ENCODE measurements at regions of chr11 and their contacts with region 1.

Region 1: DNA sequence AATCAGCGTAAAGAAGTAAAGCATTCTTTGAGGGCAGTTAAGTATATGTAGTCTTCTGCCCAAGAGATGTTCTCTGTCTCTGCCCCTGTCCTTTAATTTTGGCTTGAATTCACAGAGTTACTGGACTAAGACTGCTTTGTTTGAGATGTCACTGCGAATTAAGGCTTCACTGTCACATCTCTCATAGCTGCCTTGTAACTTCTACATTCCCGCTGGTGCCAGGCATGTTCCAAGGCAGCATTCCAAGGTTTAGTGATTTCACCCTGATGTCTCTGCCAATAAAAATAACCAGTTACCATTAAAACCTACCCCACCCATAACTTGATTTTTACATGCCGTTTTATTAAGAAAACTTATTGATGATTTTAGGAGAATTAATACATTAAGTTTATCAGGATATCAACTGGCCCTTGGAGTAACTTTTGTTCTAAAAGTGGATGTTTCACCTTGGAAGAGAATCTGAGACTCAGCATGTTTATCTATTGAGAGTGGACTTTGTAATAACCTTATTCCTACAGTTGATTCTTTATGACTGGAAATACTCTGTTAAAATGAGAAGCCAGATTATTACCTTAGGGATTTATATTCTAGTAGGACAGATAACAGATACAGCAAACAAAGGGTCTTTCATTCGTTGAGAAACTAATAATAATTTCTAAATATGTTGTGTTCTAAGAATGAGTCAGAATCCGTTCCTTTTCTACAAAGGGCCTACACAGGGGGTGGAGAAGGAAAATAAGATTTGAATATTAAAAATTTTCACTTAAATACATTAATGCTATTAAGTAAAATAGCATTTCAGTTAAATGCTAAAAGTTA is 110.2 kb downstream of the UVRAG start:
- DNase-seq: peak; percentile 52
- ATAC-seq: peak; percentile 75
- H3K4me3 ChIP-seq: no peak overlapping the region
- H3K27ac ChIP-seq: peak overlapping the region; percentile 46
- H3K4me1 ChIP-seq: peaks cover 19% of the 10 kb centered on the region
- H3K27me3 ChIP-seq: no peaks in the 10 kb centered on the region
- CTCF ChIP-seq: no peak

Region 2: DNA sequence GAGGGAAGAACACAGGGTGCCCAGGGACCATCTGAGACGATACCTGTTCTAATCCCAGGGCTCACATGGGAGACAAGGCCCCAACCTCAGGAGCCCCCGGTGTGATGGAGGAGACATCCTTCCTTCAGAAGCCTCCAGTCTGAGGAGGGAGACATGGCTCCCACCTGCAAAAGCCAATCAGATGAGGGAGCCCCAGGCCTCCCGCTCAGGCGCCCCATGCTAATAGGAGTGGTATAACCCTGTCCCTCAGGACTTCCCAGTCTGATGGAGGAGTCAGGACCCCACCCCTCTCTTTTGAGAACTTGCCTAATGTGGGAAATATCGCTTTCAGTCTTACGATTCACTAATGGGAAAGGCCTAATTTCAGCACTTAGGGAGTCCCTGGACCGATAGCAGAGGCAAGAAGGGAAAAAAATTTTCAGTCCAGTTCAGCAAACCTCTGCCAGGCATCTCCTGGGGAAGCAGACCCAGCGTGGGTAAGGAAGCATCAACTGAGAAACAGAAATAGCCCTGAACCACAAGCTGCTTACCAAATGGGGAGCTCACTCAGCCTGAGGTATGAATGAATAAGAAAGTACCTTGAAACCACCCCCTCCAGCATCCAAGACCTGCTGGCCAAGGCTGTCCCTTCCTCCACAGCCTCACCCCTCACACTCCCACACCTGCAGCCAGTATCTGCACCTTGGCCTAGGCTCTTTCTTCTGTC is 579.6 kb before region 1 on chr11:
- CTCF ChIA-PET with region 1: no interaction called
- POLR2A ChIA-PET with region 1: interaction called, 15 read pairs
- intact Hi-C with region 1: no loop called
- DNase-seq: no peak
- ATAC-seq: no peak
- H3K4me3 ChIP-seq: no peak overlapping the region
- H3K27ac ChIP-seq: no peak overlapping the region
- H3K4me1 ChIP-seq: peaks cover 19% of the 10 kb centered on the region
- H3K27me3 ChIP-seq: no peaks in the 10 kb centered on the region
- CTCF ChIP-seq: no peak

Region 3: GRCh38 chr11:75907906-75908527 is 17.2 kb before region 1 on chr11:
- CTCF ChIA-PET with region 1: no interaction called
- POLR2A ChIA-PET with region 1: no interaction called
- intact Hi-C with region 1: no loop called
- DNase-seq: no peak
- ATAC-seq: no peak
- H3K4me3 ChIP-seq: no peak overlapping the region
- H3K27ac ChIP-seq: no peak overlapping the region
- H3K4me1 ChIP-seq: no peaks in the 10 kb centered on the region
- H3K27me3 ChIP-seq: no peaks in the 10 kb centered on the region
- CTCF ChIP-seq: no peak

Region 4: GRCh38 chr11:75946531-75947530 is 21.7 kb after region 1 on chr11:
- CTCF ChIA-PET with region 1: no interaction called
- POLR2A ChIA-PET with region 1: interaction called, 24 read pairs
- intact Hi-C with region 1: no loop called
- DNase-seq: peak; percentile 76
- ATAC-seq: peak; percentile 72
- H3K4me3 ChIP-seq: no peak overlapping the region
- H3K27ac ChIP-seq: peak overlapping the region; percentile 45
- H3K4me1 ChIP-seq: peaks cover 17% of the 10 kb centered on the region
- H3K27me3 ChIP-seq: no peaks in the 10 kb centered on the region
- CTCF ChIP-seq: no peak

Region 5: GRCh38 chr11:75969670-75970307 is 44.6 kb after region 1 on chr11:
- CTCF ChIA-PET with region 1: no interaction called
- POLR2A ChIA-PET with region 1: no interaction called
- intact Hi-C with region 1: loop called (anchors 2 kb)
- DNase-seq: peak; percentile 94
- ATAC-seq: peak; percentile 82
- H3K4me3 ChIP-seq: no peak overlapping the region; the same call in 1 of the 2 replicates
- H3K27ac ChIP-seq: peak overlapping the region; percentile 94
- H3K4me1 ChIP-seq: peaks cover 41% of the 10 kb centered on the region
- H3K27me3 ChIP-seq: no peaks in the 10 kb centered on the region
- CTCF ChIP-seq: no peak